B cell (primary cell): ENCODE measurements at regions of chr17 and their contacts with region 1.

Region 1: GRCh38 chr17:50638851-50639767 is 4.4 kb downstream of the ABCC3 start:
- DNase-seq: no peak
- ATAC-seq: no peak
- H3K4me3 ChIP-seq: no peak overlapping the region
- H3K4me3 Mint-ChIP-seq: no peak overlapping the region
- H3K27ac ChIP-seq: no peak overlapping the region
- H3K27ac Mint-ChIP-seq: no peak overlapping the region
- H3K4me1 ChIP-seq: peaks cover 6 to 10% of the 10 kb centered on the region in 2 donors
- H3K4me1 Mint-ChIP-seq: peaks cover 3% of the 10 kb centered on the region
- H3K27me3 ChIP-seq: peaks cover 0 to 40% (median 12%) of the 10 kb centered on the region in 4 experiments
- H3K27me3 Mint-ChIP-seq: peaks cover 37% of the 10 kb centered on the region
- CTCF ChIP-seq: no peak

Region 2: DNA sequence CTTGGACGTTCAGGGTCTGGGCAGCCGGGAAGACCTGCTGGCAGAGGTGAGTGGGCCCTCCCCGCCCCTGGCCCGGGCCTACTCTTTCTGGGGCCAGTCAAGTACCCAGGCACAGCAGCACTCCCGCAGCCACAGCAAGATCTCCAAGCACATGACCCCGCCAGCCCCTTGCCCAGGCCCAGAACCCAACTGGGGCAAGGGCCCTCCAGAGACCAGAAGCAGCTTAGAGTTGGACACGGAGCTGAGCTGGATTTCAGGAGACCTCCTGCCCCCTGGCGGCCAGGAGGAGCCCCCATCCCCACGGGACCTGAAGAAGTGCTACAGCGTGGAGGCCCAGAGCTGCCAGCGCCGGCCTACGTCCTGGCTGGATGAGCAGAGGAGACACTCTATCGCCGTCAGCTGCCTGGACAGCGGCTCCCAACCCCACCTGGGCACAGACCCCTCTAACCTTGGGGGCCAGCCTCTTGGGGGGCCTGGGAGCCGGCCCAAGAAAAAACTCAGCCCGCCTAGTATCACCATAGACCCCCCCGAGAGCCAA is 13.0 kb before region 1 on chr17:
- CTCF ChIA-PET with region 1: interaction called, 12 read pairs
- POLR2A ChIA-PET with region 1: no interaction called
- intact Hi-C with region 1: no loop called
- DNase-seq: peak; percentile 69
- ATAC-seq: peak; percentile 70
- H3K4me3 ChIP-seq: no peak overlapping the region
- H3K4me3 Mint-ChIP-seq: no peak overlapping the region
- H3K27ac ChIP-seq: no peak overlapping the region
- H3K27ac Mint-ChIP-seq: no peak overlapping the region
- H3K4me1 ChIP-seq: peaks cover 0 to 6% of the 10 kb centered on the region in 2 donors
- H3K4me1 Mint-ChIP-seq: no peaks in the 10 kb centered on the region
- H3K27me3 ChIP-seq: peaks cover 0 to 61% (median 9%) of the 10 kb centered on the region in 4 experiments
- H3K27me3 Mint-ChIP-seq: peaks cover 45% of the 10 kb centered on the region
- CTCF ChIP-seq: peak; percentile 58

Region 3: GRCh38 chr17:50828508-50829170 is 189.5 kb after region 1 on chr17:
- CTCF ChIA-PET with region 1: no interaction called
- POLR2A ChIA-PET with region 1: no interaction called
- intact Hi-C with region 1: loop called (anchors 5 kb)
- DNase-seq: no peak
- ATAC-seq: no peak
- H3K4me3 ChIP-seq: no peak overlapping the region
- H3K4me3 Mint-ChIP-seq: no peak overlapping the region
- H3K27ac ChIP-seq: no peak overlapping the region
- H3K27ac Mint-ChIP-seq: no peak overlapping the region
- H3K4me1 ChIP-seq: no peaks in the 10 kb centered on the region
- H3K4me1 Mint-ChIP-seq: no peaks in the 10 kb centered on the region
- H3K27me3 ChIP-seq: peaks cover 0 to 5% (median under 1%) of the 10 kb centered on the region in 4 experiments
- H3K27me3 Mint-ChIP-seq: peaks cover 19% of the 10 kb centered on the region
- CTCF ChIP-seq: no peak

Region 4: GRCh38 chr17:50867363-50868110 is 228.4 kb after region 1 on chr17:
- CTCF ChIA-PET with region 1: no interaction called
- POLR2A ChIA-PET with region 1: no interaction called
- intact Hi-C with region 1: no loop called
- DNase-seq: peak; percentile 94
- ATAC-seq: peak; percentile 35
- H3K4me3 ChIP-seq: peak overlapping the region; percentile 82 to 98 (median 93)
- H3K4me3 Mint-ChIP-seq: peak overlapping the region; percentile 97
- H3K27ac ChIP-seq: peak overlapping the region; percentile 95 to 97
- H3K27ac Mint-ChIP-seq: peak overlapping the region; percentile 99
- H3K4me1 ChIP-seq: peaks cover 30 to 33% of the 10 kb centered on the region in 2 donors
- H3K4me1 Mint-ChIP-seq: peaks cover 46% of the 10 kb centered on the region
- H3K27me3 ChIP-seq: no peaks in the 10 kb centered on the region
- H3K27me3 Mint-ChIP-seq: no peaks in the 10 kb centered on the region
- CTCF ChIP-seq: no peak